PC-9 (cell line): ENCODE measurements at regions of chr6 and their contacts with region 1.

Region 1: DNA sequence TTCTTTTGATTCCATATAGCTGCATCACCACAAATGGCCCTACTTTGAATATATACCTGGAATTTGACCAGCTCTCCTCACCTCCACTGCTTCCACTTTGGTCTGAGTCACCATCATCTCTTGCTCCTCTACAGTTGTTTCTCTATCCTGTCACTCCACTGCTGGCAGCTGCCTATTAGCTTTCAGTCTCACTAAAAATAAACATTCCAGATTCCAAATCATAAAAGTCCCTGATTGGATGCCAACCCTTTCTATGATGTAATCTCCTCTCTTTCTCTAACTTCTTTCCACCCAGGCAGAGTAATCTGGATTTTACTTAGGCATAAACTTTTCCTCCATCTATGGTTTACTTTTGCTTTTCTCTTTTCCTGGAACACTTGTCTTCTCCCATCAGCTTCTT is 49.1 kb downstream of the RFPL4B start:
- DNase-seq: no peak
- H3K4me3 ChIP-seq: no peak overlapping the region
- H3K27ac ChIP-seq: no peak overlapping the region
- H3K4me1 ChIP-seq: no peaks in the 10 kb centered on the region
- H3K27me3 ChIP-seq: no peaks in the 10 kb centered on the region
- CTCF ChIP-seq: no peak

Region 2: GRCh38 chr6:112321941-112322424 is 74.2 kb before region 1 on chr6:
- CTCF ChIA-PET with region 1: no interaction called
- POLR2A ChIA-PET with region 1: no interaction called
- intact Hi-C with region 1: no loop called
- DNase-seq: no peak
- H3K4me3 ChIP-seq: no peak overlapping the region
- H3K27ac ChIP-seq: no peak overlapping the region
- H3K4me1 ChIP-seq: 0 out of 2 replicates have a peak, but pooled peaks cover 4% of the 10 kb centered on the region
- H3K27me3 ChIP-seq: no peaks in the 10 kb centered on the region
- CTCF ChIP-seq: no peak

Region 3: GRCh38 chr6:113458368-113459010 is 1062.3 kb after region 1 on chr6:
- CTCF ChIA-PET with region 1: interaction called, 10 read pairs
- POLR2A ChIA-PET with region 1: no interaction called
- intact Hi-C with region 1: no loop called
- DNase-seq: no peak
- H3K4me3 ChIP-seq: no peak overlapping the region
- H3K27ac ChIP-seq: no peak overlapping the region
- H3K4me1 ChIP-seq: peaks cover 8% of the 10 kb centered on the region
- H3K27me3 ChIP-seq: no peaks in the 10 kb centered on the region
- CTCF ChIP-seq: no peak